ENCODE measurements at regions of chr17 and their contacts with region 1.

Region 1: GRCh38 chr17:31558748-31559644 is 167.5 kb downstream of the RAB11FIP4 start:
- DNase-seq: no peak
- H3K4me3 ChIP-seq: peak overlapping the region; percentile 84
- CTCF ChIP-seq: peak; percentile 52

Region 2: DNA sequence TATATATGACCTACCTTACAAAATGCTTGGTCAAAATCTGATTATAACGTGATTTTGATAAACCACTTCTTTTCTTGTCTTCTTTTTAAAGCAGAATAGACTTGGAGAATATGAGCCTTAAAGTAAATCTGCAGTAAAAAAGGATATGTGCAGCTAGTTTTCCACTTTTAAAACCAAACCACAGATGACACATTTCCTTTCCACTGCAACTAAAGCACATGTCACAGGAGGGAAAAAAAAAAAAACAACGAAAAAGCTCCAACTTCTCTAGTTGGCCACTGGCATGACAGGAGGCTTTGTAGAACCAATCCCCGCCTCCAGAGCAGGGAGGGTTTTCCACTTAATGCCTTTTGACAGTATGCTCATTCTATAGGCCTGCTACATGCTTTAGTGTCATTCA is 237.5 kb before region 1 on chr17 and contains the start of gene EVI2A:
- CTCF ChIA-PET with region 1: no interaction called
- POLR2A ChIA-PET with region 1: no interaction called
- DNase-seq: no peak
- H3K4me3 ChIP-seq: no peak within 1 kb of the TSS
- CTCF ChIP-seq: no peak

Region 3: GRCh38 chr17:31487648-31488263 is 71.2 kb before region 1 on chr17:
- CTCF ChIA-PET with region 1: no interaction called
- POLR2A ChIA-PET with region 1: no interaction called
- DNase-seq: no peak
- H3K4me3 ChIP-seq: peak overlapping the region; percentile 36
- CTCF ChIP-seq: no peak

Region 4: GRCh38 chr17:31586946-31587345 is 27.9 kb after region 1 on chr17:
- CTCF ChIA-PET with region 1: interaction called, 10 read pairs
- POLR2A ChIA-PET with region 1: no interaction called
- DNase-seq: no peak
- H3K4me3 ChIP-seq: no peak overlapping the region
- CTCF ChIP-seq: no peak

Region 5: DNA sequence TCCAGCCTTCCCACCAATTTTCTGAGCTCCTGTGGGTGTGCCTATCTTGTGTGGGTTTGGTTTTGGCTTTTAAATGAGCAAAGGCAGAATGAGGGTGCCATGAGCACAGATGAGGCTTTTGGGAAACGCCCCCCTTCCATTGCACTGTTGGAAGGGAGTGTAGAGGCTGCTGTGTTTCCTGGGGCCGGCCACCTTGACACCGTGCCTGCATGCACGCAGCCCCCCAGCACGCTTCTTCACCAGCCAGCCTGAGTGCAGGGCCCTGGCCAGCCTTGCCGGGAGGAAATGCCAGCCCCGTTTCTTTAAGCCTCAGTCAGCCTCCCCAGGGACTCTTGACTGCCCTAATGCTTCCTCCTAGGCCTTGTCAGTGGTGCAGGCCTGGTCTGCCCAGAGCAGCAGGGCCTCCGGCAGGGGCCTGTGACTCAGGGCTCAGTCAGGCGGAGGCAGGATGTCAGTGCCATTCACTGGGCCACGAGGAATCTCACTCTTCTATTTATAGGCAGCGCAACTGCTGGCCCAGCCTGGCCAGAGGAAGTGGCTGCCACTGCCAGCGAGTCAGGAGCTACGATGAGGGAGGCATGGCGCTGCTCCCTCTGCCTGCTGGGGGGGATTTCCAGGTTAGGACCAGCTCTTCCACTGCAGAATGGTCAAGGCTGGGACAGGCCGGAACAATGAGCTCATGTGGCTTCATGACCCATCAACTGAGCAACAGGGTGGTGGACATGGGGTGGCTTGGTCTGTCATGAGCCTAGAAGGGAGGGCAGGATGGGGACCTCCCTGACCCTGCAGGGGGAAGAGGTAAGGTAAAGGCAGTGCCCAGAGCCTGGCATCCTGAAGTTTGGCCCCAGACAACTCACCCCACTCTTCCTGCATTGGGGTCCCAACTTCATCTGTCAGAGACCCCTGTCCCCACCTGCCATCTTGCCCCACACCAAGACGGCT is 37.7 kb after region 1 on chr17:
- CTCF ChIA-PET with region 1: interaction called, 6 read pairs
- POLR2A ChIA-PET with region 1: interaction called, 24 read pairs
- DNase-seq: peak; percentile 97
- H3K4me3 ChIP-seq: no peak overlapping the region
- CTCF ChIP-seq: no peak

Region 6: GRCh38 chr17:31834448-31834847 is 275.5 kb after region 1 on chr17:
- CTCF ChIA-PET with region 1: interaction called, 15 read pairs
- POLR2A ChIA-PET with region 1: interaction called, 3 read pairs
- DNase-seq: no peak
- H3K4me3 ChIP-seq: no peak overlapping the region
- CTCF ChIP-seq: no peak

Region 7: DNA sequence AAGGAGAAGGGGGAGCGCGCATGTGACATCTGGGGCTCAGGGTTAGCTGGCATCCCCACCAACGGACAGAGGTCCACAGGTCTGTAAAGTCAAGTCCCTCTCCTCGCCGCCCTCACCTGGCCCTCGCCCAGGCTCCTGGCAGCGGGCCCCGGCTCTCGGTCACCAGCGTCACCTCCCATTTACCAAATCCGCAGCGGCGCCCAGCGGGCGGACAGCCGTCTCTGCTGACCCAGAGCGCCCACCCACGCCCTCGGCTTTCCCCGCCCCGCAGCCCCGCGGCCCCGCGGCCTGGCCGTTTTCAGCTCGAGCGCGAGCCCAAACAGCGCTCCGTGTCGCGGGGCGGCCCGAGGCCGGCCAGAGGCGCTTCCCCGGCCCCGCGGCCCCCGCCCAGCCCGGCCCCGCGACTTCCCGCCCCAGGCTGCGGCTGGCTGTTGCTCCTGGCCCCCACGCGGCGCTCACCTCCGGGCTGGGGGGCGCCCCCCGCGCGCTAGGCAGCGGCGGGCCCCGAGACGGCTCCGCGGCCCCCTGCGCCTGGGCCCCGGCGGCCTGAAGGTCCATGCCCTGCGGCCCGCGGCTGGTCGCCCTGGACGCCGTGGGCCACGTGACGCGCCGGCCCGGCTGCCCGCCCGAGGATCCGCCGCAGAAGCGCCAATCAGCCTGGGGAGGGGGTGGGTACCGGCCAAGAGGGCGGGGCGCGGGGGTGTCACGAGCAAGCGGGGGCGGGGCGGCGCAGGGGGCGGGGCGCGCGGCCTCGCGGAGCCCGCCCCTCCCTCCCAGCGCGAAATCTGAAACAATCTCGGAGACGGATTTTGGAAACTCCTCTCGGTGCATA is 299.9 kb after region 1 on chr17 and contains the start of gene COPRS:
- CTCF ChIA-PET with region 1: interaction called, 18 read pairs
- POLR2A ChIA-PET with region 1: interaction called, 7 read pairs
- DNase-seq: no peak
- H3K4me3 ChIP-seq: peak within 1 kb of the TSS; percentile 72
- CTCF ChIP-seq: peak; percentile 26